Activated CD4-positive, alpha-beta memory T cell treated with anti-CD3 and anti-CD28 coated beads for 36 hours (primary cell): ENCODE measurements at regions of chr1 and their contacts with region 1.

Region 1: DNA sequence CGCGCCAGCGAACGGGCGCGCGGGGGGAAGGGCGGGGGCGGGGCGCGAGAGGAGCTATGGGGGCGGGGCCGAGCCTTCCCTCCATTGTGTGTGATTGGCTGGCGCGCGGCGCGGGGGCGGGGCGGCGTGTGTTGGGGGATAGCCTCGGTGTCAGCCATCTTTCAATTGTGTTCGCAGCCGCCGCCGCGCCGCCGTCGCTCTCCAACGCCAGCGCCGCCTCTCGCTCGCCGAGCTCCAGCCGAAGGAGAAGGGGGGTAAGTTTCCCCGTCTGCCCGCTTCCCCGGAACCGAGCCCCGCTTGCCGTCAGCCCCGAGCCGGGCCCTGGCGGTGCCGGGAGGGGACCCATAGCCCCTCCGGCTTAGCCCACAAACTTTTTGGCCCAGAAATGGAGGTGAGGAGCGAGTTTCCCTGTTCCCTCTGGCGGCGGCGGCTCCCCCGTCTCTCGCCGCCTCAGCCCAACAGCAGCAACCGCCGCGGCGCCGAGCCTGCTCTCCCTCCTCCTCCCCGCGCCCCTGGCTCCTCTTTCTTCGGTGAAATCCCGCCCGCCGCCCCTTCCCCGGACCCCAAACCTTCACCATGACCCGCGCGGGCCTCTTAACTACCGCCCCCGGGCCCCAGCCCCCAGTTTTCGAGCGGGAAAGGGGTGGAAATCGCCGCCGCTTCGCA is at the start of gene H3-3A:
- DNase-seq: peak; percentile 98
- H3K4me3 Mint-ChIP-seq: peak within 1 kb of the TSS; percentile 100
- H3K27ac Mint-ChIP-seq: peak within 1 kb of the TSS; percentile 99
- H3K4me1 Mint-ChIP-seq: peaks cover 42% of the 10 kb centered on the region
- H3K27me3 Mint-ChIP-seq: no peaks in the 10 kb centered on the region
- total RNA-seq, gene H3-3A: 317 to 320 TPM

Region 2: GRCh38 chr1:225467193-225468020 is 595.3 kb before region 1 on chr1:
- CTCF ChIA-PET with region 1: no interaction called
- POLR2A ChIA-PET with region 1: interaction called, 6 read pairs
- intact Hi-C with region 1: loop called (anchors 2 kb)
- DNase-seq: peak; percentile 91
- H3K4me3 Mint-ChIP-seq: peak overlapping the region; percentile 92
- H3K27ac Mint-ChIP-seq: peak overlapping the region; percentile 99
- H3K4me1 Mint-ChIP-seq: peaks cover 26% of the 10 kb centered on the region
- H3K27me3 Mint-ChIP-seq: no peaks in the 10 kb centered on the region

Region 3: DNA sequence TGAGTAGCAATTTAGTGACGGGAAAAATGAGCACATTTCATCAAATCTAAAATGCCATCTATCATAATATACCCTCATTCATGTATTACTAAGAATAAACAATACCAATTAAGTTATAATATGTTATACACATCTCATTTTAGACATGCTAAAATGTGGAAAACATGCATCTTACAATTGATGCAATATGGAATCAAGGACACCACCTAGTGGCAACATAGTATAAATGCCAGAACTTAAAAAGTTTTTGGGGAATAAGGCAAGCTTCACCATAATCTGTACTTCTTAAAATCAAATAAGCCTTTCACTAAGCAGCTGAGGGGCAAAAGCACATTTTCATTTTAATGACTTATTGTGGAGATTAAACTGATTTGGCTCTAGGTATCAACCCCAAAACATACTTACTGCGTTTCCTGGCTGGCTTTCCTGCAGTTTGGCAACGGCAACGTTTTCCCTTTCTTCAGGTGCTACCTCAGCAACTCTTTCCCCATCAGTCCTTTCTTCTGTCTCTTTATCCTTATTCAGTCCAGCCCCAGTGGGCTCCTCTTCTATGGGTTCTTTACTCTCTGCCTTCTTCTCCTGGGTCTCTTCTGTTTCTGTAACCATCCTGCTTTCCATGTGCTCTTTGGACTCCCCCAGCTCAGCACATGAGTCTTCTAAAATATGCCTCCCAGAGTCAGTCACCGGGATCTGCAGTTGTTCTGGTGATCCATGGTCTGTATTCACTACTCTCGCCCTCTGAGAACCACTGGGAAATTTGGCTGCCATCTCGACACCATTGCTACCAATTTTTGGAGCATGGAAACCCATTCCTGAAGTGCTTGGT is 75.0 kb before region 1 on chr1:
- CTCF ChIA-PET with region 1: interaction called, 13 read pairs
- POLR2A ChIA-PET with region 1: interaction called, 7 read pairs
- intact Hi-C with region 1: no loop called
- DNase-seq: no peak
- H3K4me3 Mint-ChIP-seq: no peak overlapping the region
- H3K27ac Mint-ChIP-seq: peak overlapping the region; percentile 19
- H3K4me1 Mint-ChIP-seq: peaks cover 29% of the 10 kb centered on the region
- H3K27me3 Mint-ChIP-seq: no peaks in the 10 kb centered on the region

Region 4: GRCh38 chr1:226078374-226078773 is 15.7 kb after region 1 on chr1:
- CTCF ChIA-PET with region 1: interaction called, 28 read pairs
- POLR2A ChIA-PET with region 1: interaction called, 24 read pairs
- intact Hi-C with region 1: loop called (anchors 2 kb)
- DNase-seq: no peak
- H3K4me3 Mint-ChIP-seq: no peak overlapping the region
- H3K27ac Mint-ChIP-seq: no peak overlapping the region
- H3K4me1 Mint-ChIP-seq: peaks cover 8% of the 10 kb centered on the region
- H3K27me3 Mint-ChIP-seq: no peaks in the 10 kb centered on the region

Region 5: GRCh38 chr1:226109829-226110248 is 47.1 kb after region 1 on chr1:
- CTCF ChIA-PET with region 1: interaction called, 38 read pairs
- POLR2A ChIA-PET with region 1: interaction called, 18 read pairs
- intact Hi-C with region 1: loop called (anchors 2 kb)
- DNase-seq: peak; percentile 89
- H3K4me3 Mint-ChIP-seq: peak overlapping the region; percentile 76
- H3K27ac Mint-ChIP-seq: peak overlapping the region; percentile 79
- H3K4me1 Mint-ChIP-seq: peaks cover 15% of the 10 kb centered on the region
- H3K27me3 Mint-ChIP-seq: no peaks in the 10 kb centered on the region

Region 6: DNA sequence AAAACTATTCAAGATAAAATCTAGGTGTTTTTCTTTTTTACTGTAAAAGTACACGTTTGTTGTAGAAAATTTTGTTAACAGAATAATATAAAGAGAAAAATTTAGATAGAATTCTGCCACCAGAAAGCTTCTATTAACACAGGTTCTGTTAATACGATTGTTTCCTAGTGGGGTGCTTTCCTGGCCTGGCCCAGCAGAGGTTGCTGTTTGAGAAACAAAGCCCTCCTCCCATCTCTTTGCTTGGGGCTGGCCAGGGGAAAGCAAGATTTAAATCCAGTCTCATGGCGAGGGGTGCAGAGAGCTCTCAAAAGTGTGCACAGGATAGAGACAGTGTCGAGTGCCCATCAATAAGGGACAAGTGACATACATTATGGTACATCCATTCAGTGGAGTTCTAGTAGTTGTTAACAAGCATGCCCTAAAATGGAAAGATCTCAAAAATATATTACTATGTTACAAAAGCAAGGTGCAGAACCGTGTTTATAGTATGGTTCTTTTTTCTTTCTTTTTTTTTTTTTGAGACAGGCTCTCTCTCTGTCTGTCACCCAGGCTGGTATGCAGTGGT is 138.4 kb after region 1 on chr1:
- CTCF ChIA-PET with region 1: interaction called, 13 read pairs
- POLR2A ChIA-PET with region 1: no interaction called
- intact Hi-C with region 1: no loop called
- DNase-seq: no peak
- H3K4me3 Mint-ChIP-seq: no peak overlapping the region
- H3K27ac Mint-ChIP-seq: no peak overlapping the region
- H3K4me1 Mint-ChIP-seq: peaks cover 2% of the 10 kb centered on the region
- H3K27me3 Mint-ChIP-seq: peaks cover 2% of the 10 kb centered on the region